ENCODE measurements at regions of chr2 and their contacts with region 1.

Region 1: DNA sequence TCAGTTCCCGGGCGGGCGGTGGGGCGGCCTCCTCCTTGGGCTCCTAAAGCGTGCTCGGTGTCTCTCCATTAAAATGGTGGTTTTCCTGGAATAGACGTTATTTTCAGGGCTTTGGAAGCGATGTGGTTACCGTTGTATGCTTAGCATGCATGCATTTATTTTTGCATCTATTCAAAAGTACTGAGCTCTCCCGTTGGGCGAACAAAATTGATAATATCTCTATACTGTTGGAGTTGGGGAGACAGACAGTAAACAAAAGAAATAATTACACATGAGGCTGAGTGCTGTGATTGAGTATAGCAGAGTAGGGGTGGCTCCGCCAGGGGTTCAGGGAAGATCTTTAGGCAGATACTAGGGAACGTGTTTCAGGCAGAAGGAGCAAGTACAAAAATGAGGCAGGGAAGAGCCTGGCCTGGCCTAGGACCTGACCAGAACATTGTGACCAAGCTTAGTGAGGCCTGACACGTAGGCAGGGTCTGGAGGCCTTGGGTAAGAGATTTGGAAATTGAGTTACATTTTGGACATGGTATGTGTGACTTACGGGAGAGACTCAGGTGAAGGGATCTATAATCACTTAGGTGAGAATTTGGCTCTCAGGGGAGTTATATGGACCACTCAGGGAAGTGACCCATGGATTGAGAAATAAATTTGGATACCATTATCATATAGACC is 674 bp downstream of the NCAPH start:
- DNase-seq: peak in 3 of 4 experiments; percentile 34 to 53 (median 51)
- ATAC-seq: peak; percentile 35
- H3K4me3 ChIP-seq: peak overlapping the region; percentile 55
- H3K27ac ChIP-seq: peak overlapping the region; percentile 94
- H3K4me1 ChIP-seq: peaks cover 18 to 30% of the 10 kb centered on the region in 2 experiments
- H3K27me3 ChIP-seq: no peaks in the 10 kb centered on the region
- CTCF ChIP-seq: no peak
- EP300 ChIP-seq: no peak
- POLR2A ChIP-seq: peak; percentile 81
- RAD21 ChIP-seq: no peak

Region 2: GRCh38 chr2:96186562-96186961 is 149.7 kb before region 1 on chr2:
- CTCF ChIA-PET with region 1: no interaction called
- POLR2A ChIA-PET with region 1: no interaction called
- in situ Hi-C with region 1: no loop called
- intact Hi-C with region 1: no loop called
- DNase-seq: no peak
- ATAC-seq: no peak
- H3K4me3 ChIP-seq: no peak overlapping the region
- H3K27ac ChIP-seq: no peak overlapping the region
- H3K4me1 ChIP-seq: peaks cover 0 to 17% of the 10 kb centered on the region in 2 experiments; a peak in 2 of 5 replicates
- H3K27me3 ChIP-seq: no peaks in the 10 kb centered on the region
- CTCF ChIP-seq: no peak
- EP300 ChIP-seq: no peak
- POLR2A ChIP-seq: no peak
- RAD21 ChIP-seq: no peak

Region 3: DNA sequence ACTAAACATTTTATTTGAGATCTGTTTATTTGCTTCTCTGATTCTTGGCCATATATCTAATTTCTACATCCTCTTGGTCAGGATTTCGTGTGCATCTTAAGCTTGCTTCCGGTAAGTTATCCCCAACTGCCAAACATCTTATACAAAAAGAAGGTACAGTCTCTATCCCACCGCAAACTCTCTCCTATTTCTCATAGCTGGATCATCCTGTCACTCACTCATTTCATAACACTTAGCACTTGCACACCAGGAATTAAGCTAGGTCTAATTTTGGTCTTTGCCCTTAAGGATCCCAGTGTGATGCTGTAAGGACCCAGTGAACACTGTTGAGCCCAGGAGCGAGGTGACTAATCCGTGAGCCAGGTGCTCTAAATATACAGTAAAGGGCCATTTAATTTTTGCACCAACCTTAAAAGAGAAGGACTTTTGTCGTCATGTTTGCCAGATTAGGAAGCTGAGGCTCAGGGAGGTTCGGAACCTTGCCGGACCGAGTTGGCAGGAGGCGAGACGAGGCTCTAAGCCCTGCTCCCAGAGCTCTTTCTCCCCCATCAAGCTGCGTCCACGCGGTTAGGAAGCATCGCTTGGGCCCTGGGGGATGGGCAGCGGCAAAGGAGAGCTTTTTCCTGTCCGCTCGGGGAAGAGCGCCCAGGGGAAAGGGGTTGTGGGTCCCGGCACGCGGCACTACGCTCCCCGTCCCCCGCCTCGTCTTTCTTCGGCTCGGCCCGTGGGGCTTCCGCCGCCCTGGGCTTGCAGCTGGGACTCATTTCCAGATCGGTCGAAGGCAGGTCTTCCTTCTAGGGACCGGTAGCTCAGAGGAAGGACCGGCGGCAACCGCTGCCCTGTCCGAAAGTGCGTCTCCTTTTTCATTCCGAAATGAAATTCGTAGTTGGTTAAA is 15.3 kb before region 1 on chr2:
- CTCF ChIA-PET with region 1: no interaction called
- POLR2A ChIA-PET with region 1: interaction called, 32 read pairs
- in situ Hi-C with region 1: no loop called
- intact Hi-C with region 1: no loop called
- DNase-seq: peak; percentile 36 to 62 (median 58)
- ATAC-seq: peak; percentile 59
- H3K4me3 ChIP-seq: peak overlapping the region; percentile 52
- H3K27ac ChIP-seq: peak overlapping the region; percentile 43
- H3K4me1 ChIP-seq: peaks cover 13 to 28% of the 10 kb centered on the region in 2 experiments; a peak in 4 of 5 replicates
- H3K27me3 ChIP-seq: no peaks in the 10 kb centered on the region
- CTCF ChIP-seq: no peak
- EP300 ChIP-seq: no peak
- POLR2A ChIP-seq: 0 out of 2 replicates have a peak, but pooled peaks have one; percentile 15
- RAD21 ChIP-seq: no peak

Region 4: DNA sequence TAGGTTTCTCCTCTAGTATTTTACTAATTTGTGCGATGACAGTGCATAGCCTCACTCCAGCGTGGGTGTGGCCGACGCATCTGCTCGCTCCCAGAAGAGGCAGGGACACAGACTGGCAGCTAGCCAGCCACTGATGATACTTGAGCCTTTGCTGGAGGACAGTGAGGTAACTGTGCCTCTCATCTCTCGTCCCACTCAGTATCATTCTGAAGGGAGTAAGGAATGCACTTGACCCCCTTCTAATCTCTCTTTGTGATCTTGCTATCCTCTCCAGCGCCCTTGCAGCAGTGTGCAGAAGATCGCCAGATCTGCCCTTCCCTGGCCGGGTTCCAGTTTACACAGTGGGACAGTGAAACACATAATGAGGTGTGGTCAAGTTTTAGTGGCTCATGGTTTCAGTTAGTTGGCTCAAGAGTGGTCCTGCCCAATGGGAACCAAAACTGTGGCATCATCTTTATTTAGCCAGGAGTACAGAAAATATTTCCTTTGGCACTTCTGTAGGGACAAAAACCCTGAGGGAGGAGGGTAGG is 16.9 kb after region 1 on chr2:
- CTCF ChIA-PET with region 1: no interaction called
- POLR2A ChIA-PET with region 1: interaction called, 25 read pairs
- in situ Hi-C with region 1: no loop called
- intact Hi-C with region 1: no loop called
- DNase-seq: peak; percentile 76 to 95 (median 84)
- ATAC-seq: peak; percentile 99
- H3K4me3 ChIP-seq: no peak overlapping the region
- H3K27ac ChIP-seq: peak overlapping the region; percentile 43; the same call in 2 of the 3 replicates
- H3K4me1 ChIP-seq: peaks cover 8 to 11% of the 10 kb centered on the region in 2 experiments; a peak in 3 of 5 replicates
- H3K27me3 ChIP-seq: no peaks in the 10 kb centered on the region
- CTCF ChIP-seq: no peak
- EP300 ChIP-seq: no peak
- POLR2A ChIP-seq: no peak
- RAD21 ChIP-seq: no peak; a peak in 1 of 4 replicates

Region 5: GRCh38 chr2:96463119-96463518 is 126.9 kb after region 1 on chr2:
- CTCF ChIA-PET with region 1: no interaction called
- POLR2A ChIA-PET with region 1: no interaction called
- in situ Hi-C with region 1: no loop called
- intact Hi-C with region 1: no loop called
- DNase-seq: no peak
- ATAC-seq: no peak
- H3K4me3 ChIP-seq: no peak overlapping the region
- H3K27ac ChIP-seq: no peak overlapping the region
- H3K4me1 ChIP-seq: no peaks in the 10 kb centered on the region
- H3K27me3 ChIP-seq: peaks cover 5 to 10% of the 10 kb centered on the region in 2 experiments; a peak in 2 of 5 replicates
- CTCF ChIP-seq: no peak
- EP300 ChIP-seq: no peak
- POLR2A ChIP-seq: no peak
- RAD21 ChIP-seq: no peak